ENCODE measurements at regions of chr11 and their contacts with region 1.

Region 1: DNA sequence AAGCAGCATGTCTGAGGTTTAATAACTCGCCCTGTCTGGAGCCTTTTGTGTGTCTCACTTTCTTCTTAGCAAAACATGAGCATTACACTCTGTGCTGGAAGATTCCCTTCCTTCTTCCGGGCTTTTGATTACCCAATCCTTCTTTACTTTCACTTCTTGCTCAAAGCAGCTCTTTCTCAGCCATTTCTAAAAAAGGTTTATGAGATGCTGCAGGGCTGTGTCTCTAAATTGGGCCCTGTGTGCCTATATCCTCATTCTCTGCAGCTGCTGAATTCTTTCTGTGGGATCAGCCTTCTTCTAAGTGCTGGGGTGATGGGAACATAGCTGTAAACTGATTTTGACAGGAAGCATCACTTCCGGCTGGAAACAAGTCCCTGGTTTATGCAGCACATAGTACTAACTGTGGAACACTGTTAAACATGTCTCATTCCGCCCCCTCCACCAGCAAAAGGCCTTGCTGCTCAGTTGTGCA is 71.8 kb downstream of the PIWIL4 start:
- DNase-seq: no peak
- ATAC-seq: peak; percentile 13; the same call in 2 of the 3 replicates
- H3K4me3 ChIP-seq: 0 out of 2 replicates have a peak overlapping the region, but pooled peaks have one; percentile 39
- H3K27ac ChIP-seq: no peak overlapping the region
- H3K4me1 ChIP-seq: peaks cover 0 to 34% of the 10 kb centered on the region in 2 experiments; a peak in 4 of 5 replicates
- H3K27me3 ChIP-seq: no peaks in the 10 kb centered on the region
- CTCF ChIP-seq: no peak
- EP300 ChIP-seq: no peak
- POLR2A ChIP-seq: no peak
- RAD21 ChIP-seq: no peak

Region 2: DNA sequence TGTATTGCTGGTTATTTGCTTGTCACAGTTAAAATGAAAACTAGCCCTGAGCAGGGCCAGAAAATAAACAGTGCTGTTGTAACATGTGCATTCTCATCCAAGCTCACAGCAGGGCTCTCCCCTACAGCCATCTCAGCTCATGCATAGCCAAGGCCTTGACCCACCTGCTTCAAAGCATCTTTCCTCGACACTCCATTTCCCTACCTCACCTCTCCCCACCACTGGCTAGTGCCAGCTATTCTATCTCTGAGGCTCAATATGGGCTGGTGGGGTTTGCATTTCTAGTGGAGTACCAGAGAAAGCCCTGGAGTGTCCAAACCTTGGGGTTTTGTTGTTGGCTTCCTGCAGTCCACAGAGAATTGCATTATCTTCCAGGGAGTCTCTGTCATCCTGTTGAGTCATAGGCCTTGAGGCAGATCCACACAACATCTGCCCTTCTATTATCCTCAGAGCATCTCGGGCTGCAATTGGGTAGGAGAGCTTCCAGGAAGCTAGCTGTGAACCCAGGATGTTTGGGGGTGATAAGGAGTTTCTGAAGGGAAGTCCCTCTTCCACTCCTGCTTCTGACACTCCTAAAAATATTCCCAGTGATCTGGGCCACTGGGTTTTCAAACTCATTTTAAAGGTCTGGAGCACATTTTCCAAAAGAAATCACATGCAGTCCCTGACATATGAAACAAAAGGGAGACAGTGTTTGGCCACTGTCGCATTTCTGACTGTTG is 93.1 kb after region 1 on chr11:
- CTCF ChIA-PET with region 1: no interaction called
- POLR2A ChIA-PET with region 1: no interaction called
- in situ Hi-C with region 1: no loop called
- intact Hi-C with region 1: loop called (anchors 5 kb)
- DNase-seq: peak; percentile 33 to 88 (median 59)
- ATAC-seq: peak; percentile 89
- H3K4me3 ChIP-seq: no peak overlapping the region
- H3K27ac ChIP-seq: peak overlapping the region; percentile 36
- H3K4me1 ChIP-seq: peaks cover 4 to 46% of the 10 kb centered on the region in 2 experiments; a peak in 4 of 5 replicates
- H3K27me3 ChIP-seq: no peaks in the 10 kb centered on the region
- CTCF ChIP-seq: no peak
- EP300 ChIP-seq: peak; percentile 76
- POLR2A ChIP-seq: no peak
- RAD21 ChIP-seq: peak; percentile 12 to 27; a peak in 2 of 4 replicates